ENCODE measurements at regions of chr17 and their contacts with region 1.

Region 1: GRCh38 chr17:47789611-47790561 is 31.7 kb downstream of the OSBPL7 start:
- DNase-seq: peak; percentile 48 to 72 (median 65)
- H3K4me3 ChIP-seq: peak overlapping the region in 1 of 4 donors; percentile 39
- H3K27ac ChIP-seq: no peak overlapping the region
- H3K4me1 ChIP-seq: peaks cover 0 to 9% of the 10 kb centered on the region in 2 donors
- H3K27me3 ChIP-seq: peaks cover 42% of the 10 kb centered on the region
- CTCF ChIP-seq: peak; percentile 27 to 60 (median 44)
- POLR2A ChIP-seq: no peak

Region 2: DNA sequence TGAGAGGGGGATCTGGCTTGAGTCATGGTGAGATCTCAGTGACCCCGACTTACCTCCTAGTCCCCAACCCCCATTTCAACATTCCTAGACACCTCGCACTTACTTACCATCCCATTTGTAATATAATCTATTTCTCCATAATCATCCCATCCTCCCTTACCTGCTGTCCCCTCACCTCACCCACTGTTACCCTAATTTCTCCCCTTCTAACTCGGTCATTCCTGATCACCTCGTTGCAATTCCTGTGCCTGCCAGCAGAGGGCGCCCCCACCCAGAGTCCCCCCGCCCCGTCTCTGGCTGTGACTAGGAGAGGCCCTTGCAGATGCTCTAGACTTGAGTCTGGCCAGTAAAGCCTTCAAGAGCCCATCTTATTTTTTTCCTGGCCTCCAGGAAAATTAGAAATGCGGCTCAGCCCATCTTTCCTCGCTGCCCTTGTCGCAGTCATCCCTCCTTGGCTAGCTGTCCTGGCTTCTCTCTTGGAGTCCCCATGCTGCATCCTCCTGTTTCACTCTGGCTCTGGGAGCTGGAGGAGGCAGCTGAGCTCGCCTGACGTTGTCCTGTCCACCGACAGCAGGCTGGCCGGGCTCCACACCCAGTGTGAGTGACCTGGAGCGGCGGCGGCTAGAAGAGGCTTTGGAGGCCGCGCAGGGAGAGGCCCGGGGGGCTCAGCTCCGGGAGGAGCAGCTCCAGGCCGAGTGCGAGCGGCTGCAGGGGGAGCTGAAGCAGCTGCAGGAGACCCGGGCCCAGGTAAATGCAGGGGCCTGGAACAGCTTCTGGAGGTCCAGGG is 90.9 kb before region 1 on chr17:
- intact Hi-C with region 1: loop called (anchors 10 kb)
- DNase-seq: peak in 6 of 7 donors; percentile 46 to 83 (median 61)
- H3K4me3 ChIP-seq: no peak overlapping the region
- H3K27ac ChIP-seq: no peak overlapping the region
- H3K4me1 ChIP-seq: peaks cover 0 to 4% of the 10 kb centered on the region in 2 donors
- H3K27me3 ChIP-seq: no peaks in the 10 kb centered on the region
- CTCF ChIP-seq: peak; percentile 73 to 99 (median 87)
- POLR2A ChIP-seq: no peak

Region 3: GRCh38 chr17:47708863-47709541 is 80.9 kb before region 1 on chr17:
- intact Hi-C with region 1: loop called in 1 of 2 experiments (anchors 10 kb)
- DNase-seq: peak in 4 of 7 donors; percentile 52 to 62 (median 54)
- H3K4me3 ChIP-seq: peak overlapping the region in 1 of 4 donors; percentile 46
- H3K27ac ChIP-seq: peak overlapping the region in 1 of 5 donors; percentile 29
- H3K4me1 ChIP-seq: peaks cover 0 to 9% of the 10 kb centered on the region in 2 donors
- H3K27me3 ChIP-seq: no peaks in the 10 kb centered on the region
- CTCF ChIP-seq: no peak
- POLR2A ChIP-seq: peak in 1 of 2 donors; percentile 12

Measured in adrenal gland (tissue), 19 donors.